Activated naive CD4-positive, alpha-beta T cell treated with anti-CD3 and anti-CD28 coated beads for 36 hours (primary cell): ENCODE measurements at regions of chr3 and their contacts with region 1.

Region 1: DNA sequence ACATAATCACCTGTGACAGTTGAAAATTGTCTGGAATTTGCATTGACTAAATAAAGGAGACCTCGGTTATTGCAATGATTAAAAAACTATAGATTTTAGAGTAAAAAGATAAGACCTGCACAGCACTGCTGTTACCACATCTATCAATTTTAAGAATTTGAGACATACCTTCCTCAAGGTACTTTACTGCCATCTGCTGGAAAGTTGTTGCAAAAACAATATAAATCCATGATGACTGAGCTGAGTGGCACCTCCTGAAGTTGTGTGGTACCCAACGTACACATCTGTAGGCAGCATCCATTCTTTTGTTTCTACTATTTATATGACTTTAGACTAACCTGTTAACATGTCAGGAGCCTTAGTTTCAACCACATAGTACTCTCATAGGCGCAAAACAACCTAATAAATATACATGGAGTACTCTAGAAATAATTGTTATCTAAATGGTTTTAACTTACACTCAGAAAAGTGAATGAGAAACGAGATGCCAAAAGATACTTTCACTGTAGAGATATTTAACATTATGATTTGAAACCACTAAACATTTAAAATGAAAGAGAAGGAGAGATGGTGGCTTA is 106.7 kb downstream of the GHSR start:
- DNase-seq: peak; percentile 14
- H3K4me3 Mint-ChIP-seq: no peak overlapping the region
- H3K27ac Mint-ChIP-seq: no peak overlapping the region
- H3K4me1 Mint-ChIP-seq: no peaks in the 10 kb centered on the region
- H3K27me3 Mint-ChIP-seq: no peaks in the 10 kb centered on the region

Region 2: GRCh38 chr3:171614318-171614921 is 727.2 kb before region 1 on chr3:
- CTCF ChIA-PET with region 1: no interaction called
- intact Hi-C with region 1: loop called (anchors 1 kb)
- DNase-seq: peak; percentile 7
- H3K4me3 Mint-ChIP-seq: no peak overlapping the region
- H3K27ac Mint-ChIP-seq: no peak overlapping the region
- H3K4me1 Mint-ChIP-seq: no peaks in the 10 kb centered on the region
- H3K27me3 Mint-ChIP-seq: peaks cover 2% of the 10 kb centered on the region

Region 3: DNA sequence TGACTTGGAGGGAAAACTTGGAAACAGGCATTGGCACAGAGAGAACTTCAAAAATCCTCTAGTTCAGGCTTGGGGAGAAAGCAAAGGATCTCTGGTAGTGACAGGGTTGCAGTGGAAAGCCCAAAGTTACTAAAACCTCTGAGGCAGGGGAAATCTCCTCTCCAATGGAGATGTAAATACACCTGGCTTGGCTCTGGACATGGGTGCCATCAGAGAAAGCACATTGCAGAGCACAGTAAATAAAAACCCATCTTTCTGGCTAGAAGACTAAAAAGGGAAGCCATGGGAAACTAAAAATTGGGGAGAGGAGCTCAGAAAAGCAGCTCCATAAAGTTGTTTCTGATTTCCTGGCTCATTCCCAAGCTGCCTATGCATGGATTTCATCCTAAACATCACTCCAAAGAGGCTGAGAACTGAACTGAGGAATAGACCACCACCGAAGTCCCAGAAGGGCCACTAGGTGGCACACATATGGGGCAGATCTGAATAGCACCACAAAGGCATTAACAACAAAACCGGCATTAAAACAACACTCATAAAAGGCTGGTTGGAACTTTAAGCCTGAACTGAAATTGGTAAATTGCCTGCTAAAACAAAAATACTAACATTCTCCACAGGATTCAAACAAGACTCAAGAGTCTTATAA is 637.7 kb before region 1 on chr3:
- CTCF ChIA-PET with region 1: interaction called, 4 read pairs
- intact Hi-C with region 1: loop called (anchors 10 kb)
- DNase-seq: peak; percentile 14
- H3K4me3 Mint-ChIP-seq: no peak overlapping the region
- H3K27ac Mint-ChIP-seq: no peak overlapping the region
- H3K4me1 Mint-ChIP-seq: no peaks in the 10 kb centered on the region
- H3K27me3 Mint-ChIP-seq: peaks cover 8% of the 10 kb centered on the region

Region 4: DNA sequence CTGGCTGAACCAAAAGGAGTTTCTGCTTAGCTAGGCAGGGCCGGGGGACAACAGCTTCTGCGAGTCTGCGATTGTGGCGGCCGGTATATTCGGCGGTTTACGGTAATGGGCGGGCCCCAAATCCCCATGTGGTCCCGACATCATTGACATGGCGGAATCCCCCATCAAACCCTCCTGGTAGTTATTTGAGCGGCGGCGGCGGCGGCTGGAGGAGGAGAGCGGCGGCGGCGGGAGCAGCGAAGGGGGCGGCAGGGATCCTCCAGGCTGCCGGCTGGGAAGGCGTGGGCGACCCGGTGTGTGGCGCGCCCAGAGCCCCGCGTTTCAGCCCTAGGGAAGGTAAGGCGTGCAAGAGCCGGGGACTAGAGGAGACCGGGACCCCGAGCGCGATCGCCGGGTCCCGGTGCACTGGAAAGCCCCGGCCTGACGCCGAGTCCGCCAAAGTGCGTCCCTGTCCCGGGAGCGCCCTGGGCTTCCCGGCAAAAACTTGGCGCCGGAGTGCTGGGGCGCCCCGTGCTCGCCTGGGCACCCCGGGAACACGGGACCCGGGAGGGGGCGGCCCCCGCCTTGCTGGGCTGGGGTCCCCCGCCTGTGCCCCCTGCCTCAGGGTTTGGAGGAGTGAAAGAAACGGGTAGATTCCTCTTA is 302.0 kb before region 1 on chr3 and contains the start of gene FNDC3B:
- CTCF ChIA-PET with region 1: interaction called, 7 read pairs
- intact Hi-C with region 1: loop called (anchors 1 kb)
- DNase-seq: peak; percentile 96
- H3K4me3 Mint-ChIP-seq: peak within 1 kb of the TSS; percentile 91
- H3K27ac Mint-ChIP-seq: peak within 1 kb of the TSS; percentile 89
- H3K4me1 Mint-ChIP-seq: peaks cover 21% of the 10 kb centered on the region
- H3K27me3 Mint-ChIP-seq: no peaks in the 10 kb centered on the region
- total RNA-seq, gene FNDC3B: 9.2 to 13.5 TPM

Region 5: DNA sequence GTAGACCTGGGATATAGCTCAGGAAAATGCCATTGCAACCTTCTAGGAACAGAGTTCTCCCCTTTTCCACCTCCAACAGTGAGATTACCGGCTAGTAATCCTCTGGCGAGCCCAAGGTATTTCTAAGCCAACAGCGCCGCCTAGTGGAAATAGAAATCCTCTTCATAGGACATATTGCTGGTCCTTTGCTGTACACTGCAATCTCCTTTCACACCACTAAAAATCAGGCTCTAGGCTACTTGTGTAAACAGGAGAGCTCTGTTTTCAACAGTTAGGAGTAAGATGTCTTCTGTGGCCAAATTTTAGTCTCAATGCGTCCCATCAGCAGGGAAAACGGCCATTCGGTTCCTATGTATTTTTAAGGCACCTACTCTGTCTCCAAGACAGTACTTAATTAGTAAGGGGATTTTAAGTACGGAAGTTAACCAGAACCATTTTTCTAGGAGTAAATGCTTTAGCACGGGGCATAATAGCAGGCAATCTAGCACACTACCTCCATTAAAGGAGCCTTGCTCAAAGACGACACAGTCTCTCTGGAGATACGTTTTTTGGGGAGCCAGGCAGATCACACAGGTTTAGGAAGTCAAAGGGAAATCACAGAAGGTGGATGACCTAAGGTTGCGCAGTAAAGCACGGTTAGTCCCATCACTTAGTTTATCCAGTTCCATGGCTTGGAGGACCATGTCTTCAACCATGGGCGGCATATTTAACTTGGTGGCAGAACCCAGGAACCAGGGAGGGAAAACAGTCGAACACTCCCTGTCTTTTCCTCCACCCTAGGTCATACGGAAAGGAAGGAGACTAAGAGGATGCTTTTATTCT is 325.5 kb after region 1 on chr3:
- CTCF ChIA-PET with region 1: interaction called, 22 read pairs
- intact Hi-C with region 1: no loop called
- DNase-seq: peak; percentile 92
- H3K4me3 Mint-ChIP-seq: no peak overlapping the region
- H3K27ac Mint-ChIP-seq: no peak overlapping the region
- H3K4me1 Mint-ChIP-seq: peaks cover 11% of the 10 kb centered on the region
- H3K27me3 Mint-ChIP-seq: no peaks in the 10 kb centered on the region